CD4-positive, alpha-beta T cell (primary cell): ENCODE measurements at regions of chr17 and their contacts with region 1.

Region 1: GRCh38 chr17:39199820-39200069 is 338 bp upstream of the RPL19 start:
- DNase-seq: peak; percentile 69 to 95 (median 83)
- ATAC-seq: peak; percentile 65
- H3K4me3 ChIP-seq: peak overlapping the region; percentile 90
- H3K4me3 Mint-ChIP-seq: peak overlapping the region; percentile 90
- H3K27ac ChIP-seq: peak overlapping the region; percentile 96 to 99
- H3K27ac Mint-ChIP-seq: peak overlapping the region; percentile 94
- H3K4me1 ChIP-seq: peaks cover 78% of the 10 kb centered on the region
- H3K4me1 Mint-ChIP-seq: peaks cover 65% of the 10 kb centered on the region
- H3K27me3 ChIP-seq: no peaks in the 10 kb centered on the region
- H3K27me3 Mint-ChIP-seq: no peaks in the 10 kb centered on the region
- CTCF ChIP-seq: no peak

Region 2: DNA sequence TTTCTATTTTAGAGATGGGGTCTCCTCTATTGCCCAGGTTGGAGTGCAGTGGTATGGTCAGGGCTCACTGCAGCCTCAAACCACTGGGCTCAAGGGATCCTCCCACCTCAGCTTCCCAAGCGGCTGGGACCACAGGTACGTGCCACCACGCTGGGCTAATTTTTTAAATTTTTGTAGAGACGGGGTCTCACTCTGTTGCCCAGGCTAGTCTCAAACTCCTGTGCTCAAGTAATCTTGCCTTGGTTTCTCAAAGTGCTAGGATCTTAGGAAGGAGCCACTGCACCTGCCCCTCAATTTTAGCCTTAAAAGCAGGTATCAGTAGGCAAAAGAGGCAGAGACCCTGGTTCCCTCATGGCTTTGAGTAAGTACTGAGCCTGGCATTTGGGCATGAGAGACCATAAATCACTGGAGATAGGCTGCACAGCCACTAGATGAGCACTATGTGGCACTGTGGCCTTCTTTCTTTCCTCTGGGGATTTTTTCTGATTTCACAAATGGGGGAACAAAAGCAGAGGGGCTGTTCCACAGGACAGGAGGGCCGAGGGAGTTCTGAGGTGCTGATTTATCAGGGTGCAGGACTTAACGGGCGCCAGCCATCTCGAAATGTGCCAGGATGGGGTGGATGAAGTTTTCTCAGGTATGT is 130.5 kb before region 1 on chr17:
- CTCF ChIA-PET with region 1: no interaction called
- POLR2A ChIA-PET with region 1: no interaction called
- intact Hi-C with region 1: no loop called
- DNase-seq: peak in 4 of 14 experiments; percentile 45 to 70 (median 66)
- ATAC-seq: peak; percentile 97
- H3K4me3 ChIP-seq: no peak overlapping the region
- H3K4me3 Mint-ChIP-seq: no peak overlapping the region
- H3K27ac ChIP-seq: no peak overlapping the region
- H3K27ac Mint-ChIP-seq: no peak overlapping the region
- H3K4me1 ChIP-seq: peaks cover 7% of the 10 kb centered on the region
- H3K4me1 Mint-ChIP-seq: peaks cover 6% of the 10 kb centered on the region
- H3K27me3 ChIP-seq: no peaks in the 10 kb centered on the region
- H3K27me3 Mint-ChIP-seq: no peaks in the 10 kb centered on the region
- CTCF ChIP-seq: peak; percentile 72

Region 3: GRCh38 chr17:39164675-39165143 is 35.0 kb before region 1 on chr17:
- CTCF ChIA-PET with region 1: interaction called, 6 read pairs
- POLR2A ChIA-PET with region 1: interaction called, 35 read pairs
- intact Hi-C with region 1: no loop called
- DNase-seq: peak; percentile 56 to 85 (median 63)
- ATAC-seq: peak; percentile 86
- H3K4me3 ChIP-seq: peak overlapping the region; percentile 60
- H3K4me3 Mint-ChIP-seq: peak overlapping the region; percentile 90
- H3K27ac ChIP-seq: no peak overlapping the region
- H3K27ac Mint-ChIP-seq: no peak overlapping the region
- H3K4me1 ChIP-seq: peaks cover 32% of the 10 kb centered on the region
- H3K4me1 Mint-ChIP-seq: peaks cover 27% of the 10 kb centered on the region
- H3K27me3 ChIP-seq: peaks cover 17 to 22% of the 10 kb centered on the region in 2 experiments
- H3K27me3 Mint-ChIP-seq: peaks cover 34% of the 10 kb centered on the region
- CTCF ChIP-seq: peak; percentile 94

Region 4: GRCh38 chr17:39174907-39175694 is 24.6 kb before region 1 on chr17:
- CTCF ChIA-PET with region 1: interaction called, 12 read pairs
- POLR2A ChIA-PET with region 1: interaction called, 6 read pairs
- intact Hi-C with region 1: no loop called
- DNase-seq: peak; percentile 67 to 91 (median 74)
- ATAC-seq: peak; percentile 95
- H3K4me3 ChIP-seq: no peak overlapping the region
- H3K4me3 Mint-ChIP-seq: no peak overlapping the region
- H3K27ac ChIP-seq: no peak overlapping the region
- H3K27ac Mint-ChIP-seq: no peak overlapping the region
- H3K4me1 ChIP-seq: peaks cover 22% of the 10 kb centered on the region
- H3K4me1 Mint-ChIP-seq: peaks cover 22% of the 10 kb centered on the region
- H3K27me3 ChIP-seq: no peaks in the 10 kb centered on the region
- H3K27me3 Mint-ChIP-seq: no peaks in the 10 kb centered on the region
- CTCF ChIP-seq: peak; percentile 82

Region 5: GRCh38 chr17:39235555-39236449 is 36.1 kb after region 1 on chr17:
- CTCF ChIA-PET with region 1: interaction called, 12 read pairs
- POLR2A ChIA-PET with region 1: interaction called, 47 read pairs
- intact Hi-C with region 1: no loop called
- DNase-seq: peak in 9 of 14 experiments; percentile 23 to 80 (median 47)
- ATAC-seq: peak; percentile 45
- H3K4me3 ChIP-seq: no peak overlapping the region
- H3K4me3 Mint-ChIP-seq: no peak overlapping the region
- H3K27ac ChIP-seq: no peak overlapping the region
- H3K27ac Mint-ChIP-seq: peak overlapping the region; percentile 31
- H3K4me1 ChIP-seq: peaks cover 56% of the 10 kb centered on the region
- H3K4me1 Mint-ChIP-seq: peaks cover 44% of the 10 kb centered on the region
- H3K27me3 ChIP-seq: peaks cover 0 to 4% of the 10 kb centered on the region in 2 experiments
- H3K27me3 Mint-ChIP-seq: peaks cover 14% of the 10 kb centered on the region
- CTCF ChIP-seq: peak; percentile 63

Region 6: GRCh38 chr17:39244600-39245570 is 45.1 kb after region 1 on chr17:
- CTCF ChIA-PET with region 1: interaction called, 12 read pairs
- POLR2A ChIA-PET with region 1: interaction called, 49 read pairs
- intact Hi-C with region 1: no loop called
- DNase-seq: peak; percentile 78 to 94 (median 85)
- ATAC-seq: peak; percentile 96
- H3K4me3 ChIP-seq: no peak overlapping the region
- H3K4me3 Mint-ChIP-seq: peak overlapping the region; percentile 31
- H3K27ac ChIP-seq: no peak overlapping the region
- H3K27ac Mint-ChIP-seq: peak overlapping the region; percentile 53
- H3K4me1 ChIP-seq: peaks cover 15% of the 10 kb centered on the region
- H3K4me1 Mint-ChIP-seq: peaks cover 9% of the 10 kb centered on the region
- H3K27me3 ChIP-seq: no peaks in the 10 kb centered on the region
- H3K27me3 Mint-ChIP-seq: peaks cover 4% of the 10 kb centered on the region
- CTCF ChIP-seq: peak; percentile 94

Region 7: DNA sequence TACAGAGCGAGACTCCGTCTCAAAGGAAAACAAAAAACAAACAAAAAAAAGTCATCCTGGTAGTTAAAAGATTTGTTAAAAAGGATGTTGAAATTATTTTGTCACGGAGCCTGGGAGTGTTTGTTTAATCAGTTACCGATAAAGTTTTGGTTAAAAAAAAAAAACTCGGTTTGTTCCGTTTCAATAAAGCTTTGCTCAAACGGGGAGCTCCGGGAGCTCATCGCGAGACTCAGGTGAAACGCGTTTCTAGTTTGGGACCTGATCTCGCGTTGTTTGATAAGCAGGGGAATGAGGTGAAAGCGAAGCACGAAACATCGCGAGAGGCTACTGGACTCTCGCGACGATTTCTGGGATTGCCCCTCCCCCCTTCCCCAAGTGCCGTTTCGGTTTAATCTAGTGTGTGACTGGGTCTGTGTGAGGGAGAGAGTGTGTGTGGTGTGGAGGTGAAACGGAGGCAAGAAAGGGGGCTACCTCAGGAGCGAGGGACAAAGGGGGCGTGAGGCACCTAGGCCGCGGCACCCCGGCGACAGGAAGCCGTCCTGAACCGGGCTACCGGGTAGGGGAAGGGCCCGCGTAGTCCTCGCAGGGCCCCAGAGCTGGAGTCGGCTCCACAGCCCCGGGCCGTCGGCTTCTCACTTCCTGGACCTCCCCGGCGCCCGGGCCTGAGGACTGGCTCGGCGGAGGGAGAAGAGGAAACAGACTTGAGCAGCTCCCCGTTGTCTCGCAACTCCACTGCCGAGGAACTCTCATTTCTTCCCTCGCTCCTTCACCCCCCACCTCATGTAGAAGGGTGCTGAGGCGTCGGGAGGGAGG is 261.6 kb after region 1 on chr17 and contains the start of gene CDK12:
- CTCF ChIA-PET with region 1: no interaction called
- POLR2A ChIA-PET with region 1: interaction called, 16 read pairs
- intact Hi-C with region 1: loop called in 1 of 2 experiments (anchors 5 kb)
- DNase-seq: peak; percentile 89 to 99 (median 94)
- ATAC-seq: peak; percentile 84
- H3K4me3 ChIP-seq: peak within 1 kb of the TSS; percentile 88
- H3K4me3 Mint-ChIP-seq: peak within 1 kb of the TSS; percentile 94
- H3K27ac ChIP-seq: peak within 1 kb of the TSS; percentile 95 to 96
- H3K27ac Mint-ChIP-seq: peak within 1 kb of the TSS; percentile 91
- H3K4me1 ChIP-seq: peaks cover 38% of the 10 kb centered on the region
- H3K4me1 Mint-ChIP-seq: peaks cover 43% of the 10 kb centered on the region
- H3K27me3 ChIP-seq: no peaks in the 10 kb centered on the region
- H3K27me3 Mint-ChIP-seq: no peaks in the 10 kb centered on the region
- CTCF ChIP-seq: no peak
- total RNA-seq, gene CDK12: 99.6 to 108 TPM